B cell (primary cell): ENCODE measurements at regions of chr15 and their contacts with region 1.

Region 1: DNA sequence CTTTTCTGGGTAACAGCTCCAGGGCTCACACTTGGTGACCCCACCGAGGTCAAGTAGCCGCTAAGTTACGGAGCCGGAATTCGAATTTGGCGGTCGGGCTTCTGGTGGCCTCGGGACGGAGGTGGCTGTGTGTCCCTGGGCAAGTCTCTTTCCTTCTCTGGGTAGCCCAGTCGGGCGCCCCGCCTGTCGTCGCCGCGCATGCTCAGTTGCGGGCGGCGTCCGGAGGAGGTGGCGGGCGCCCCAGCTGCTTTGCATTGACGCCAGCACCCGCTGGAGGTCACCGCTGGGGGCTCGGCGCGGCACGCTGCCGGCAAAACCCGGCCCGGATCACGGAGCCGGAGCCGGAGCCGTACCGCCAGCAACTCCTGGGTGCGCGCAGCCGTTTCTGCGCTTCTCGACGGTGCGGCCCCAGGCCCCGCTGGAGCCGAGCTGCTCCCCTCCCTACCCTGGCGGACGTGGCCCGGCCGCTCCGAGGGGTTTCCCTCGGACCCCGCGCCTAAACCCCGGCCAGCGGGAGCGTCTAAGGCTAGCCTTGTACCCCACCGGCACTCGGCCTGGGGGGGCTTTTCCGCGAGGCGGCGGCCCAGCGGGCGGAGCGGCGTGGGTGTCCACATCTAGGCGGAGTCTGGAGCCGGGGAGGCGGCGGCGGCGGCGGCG is 474 bp upstream of the PDE8A start:
- DNase-seq: peak; percentile 98
- ATAC-seq: peak; percentile 72
- H3K4me3 ChIP-seq: peak overlapping the region; percentile 66 to 97 (median 79)
- H3K4me3 Mint-ChIP-seq: peak overlapping the region; percentile 96
- H3K27ac ChIP-seq: peak overlapping the region; percentile 97
- H3K27ac Mint-ChIP-seq: peak overlapping the region; percentile 97
- H3K4me1 ChIP-seq: peaks cover 21 to 22% of the 10 kb centered on the region in 2 donors
- H3K4me1 Mint-ChIP-seq: peaks cover 41% of the 10 kb centered on the region
- H3K27me3 ChIP-seq: no peaks in the 10 kb centered on the region
- H3K27me3 Mint-ChIP-seq: no peaks in the 10 kb centered on the region
- CTCF ChIP-seq: no peak

Region 2: DNA sequence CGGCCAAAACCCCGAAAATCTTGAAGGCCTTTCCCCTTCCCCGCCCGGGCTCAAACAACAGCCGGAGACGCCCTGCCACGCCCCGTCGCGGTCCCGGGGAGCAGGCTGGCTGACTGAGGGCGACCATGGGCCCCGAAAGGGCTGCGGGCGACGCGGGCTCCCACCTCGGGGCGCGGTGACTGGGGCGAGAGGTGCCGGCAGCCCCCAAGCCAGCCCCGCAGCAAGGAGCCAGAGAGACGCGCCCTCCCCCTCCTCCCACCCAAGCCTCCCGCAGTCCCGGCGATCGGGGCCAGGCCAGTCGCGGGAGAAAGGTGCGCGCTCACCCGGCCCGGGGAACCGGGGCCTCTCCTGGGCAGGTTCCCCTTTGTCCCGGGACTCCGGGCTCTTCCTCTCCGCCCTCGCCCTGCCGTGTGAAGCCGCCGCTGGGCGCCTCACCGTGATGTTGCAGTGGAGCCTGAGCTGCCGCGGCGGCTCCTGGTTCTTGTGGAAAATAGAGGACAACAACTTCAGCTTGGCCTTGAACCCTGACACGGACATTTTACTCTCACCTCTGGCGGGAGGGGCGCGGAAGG is 410.9 kb before region 1 on chr15:
- CTCF ChIA-PET with region 1: interaction called, 15 read pairs
- POLR2A ChIA-PET with region 1: interaction called, 5 read pairs
- intact Hi-C with region 1: loop called (anchors 2 kb)
- DNase-seq: peak; percentile 66
- ATAC-seq: peak; percentile 43
- H3K4me3 ChIP-seq: peak overlapping the region; percentile 30 to 87 (median 75)
- H3K4me3 Mint-ChIP-seq: peak overlapping the region; percentile 93
- H3K27ac ChIP-seq: peak overlapping the region; percentile 34 to 59
- H3K27ac Mint-ChIP-seq: peak overlapping the region; percentile 90
- H3K4me1 ChIP-seq: peaks cover 0 to 12% of the 10 kb centered on the region in 2 donors
- H3K4me1 Mint-ChIP-seq: peaks cover 4% of the 10 kb centered on the region
- H3K27me3 ChIP-seq: no peaks in the 10 kb centered on the region
- H3K27me3 Mint-ChIP-seq: no peaks in the 10 kb centered on the region
- CTCF ChIP-seq: no peak

Region 3: GRCh38 chr15:84716036-84716799 is 265.0 kb before region 1 on chr15 and contains the start of gene SEC11A:
- CTCF ChIA-PET with region 1: no interaction called
- POLR2A ChIA-PET with region 1: no interaction called
- intact Hi-C with region 1: loop called (anchors 5 kb)
- DNase-seq: peak; percentile 96
- ATAC-seq: peak; percentile 96
- H3K4me3 ChIP-seq: peak within 1 kb of the TSS; percentile 70 to 99 (median 87)
- H3K4me3 Mint-ChIP-seq: peak within 1 kb of the TSS; percentile 93
- H3K27ac ChIP-seq: peak within 1 kb of the TSS; percentile 82 to 92
- H3K27ac Mint-ChIP-seq: peak within 1 kb of the TSS; percentile 94
- H3K4me1 ChIP-seq: peaks cover 28 to 39% of the 10 kb centered on the region in 2 donors
- H3K4me1 Mint-ChIP-seq: peaks cover 46% of the 10 kb centered on the region
- H3K27me3 ChIP-seq: no peaks in the 10 kb centered on the region
- H3K27me3 Mint-ChIP-seq: no peaks in the 10 kb centered on the region
- CTCF ChIP-seq: no peak
- total RNA-seq, gene SEC11A: 69.8 and 78.0 TPM in 2 replicates

Region 4: GRCh38 chr15:84967380-84967779 is 13.8 kb before region 1 on chr15:
- CTCF ChIA-PET with region 1: no interaction called
- POLR2A ChIA-PET with region 1: no interaction called
- intact Hi-C with region 1: no loop called
- DNase-seq: no peak
- ATAC-seq: no peak
- H3K4me3 ChIP-seq: no peak overlapping the region
- H3K4me3 Mint-ChIP-seq: no peak overlapping the region
- H3K27ac ChIP-seq: no peak overlapping the region
- H3K27ac Mint-ChIP-seq: no peak overlapping the region
- H3K4me1 ChIP-seq: no peaks in the 10 kb centered on the region
- H3K4me1 Mint-ChIP-seq: no peaks in the 10 kb centered on the region
- H3K27me3 ChIP-seq: peaks cover 0 to 8% (median 0%) of the 10 kb centered on the region in 4 experiments
- H3K27me3 Mint-ChIP-seq: peaks cover 16% of the 10 kb centered on the region
- CTCF ChIP-seq: no peak

Region 5: DNA sequence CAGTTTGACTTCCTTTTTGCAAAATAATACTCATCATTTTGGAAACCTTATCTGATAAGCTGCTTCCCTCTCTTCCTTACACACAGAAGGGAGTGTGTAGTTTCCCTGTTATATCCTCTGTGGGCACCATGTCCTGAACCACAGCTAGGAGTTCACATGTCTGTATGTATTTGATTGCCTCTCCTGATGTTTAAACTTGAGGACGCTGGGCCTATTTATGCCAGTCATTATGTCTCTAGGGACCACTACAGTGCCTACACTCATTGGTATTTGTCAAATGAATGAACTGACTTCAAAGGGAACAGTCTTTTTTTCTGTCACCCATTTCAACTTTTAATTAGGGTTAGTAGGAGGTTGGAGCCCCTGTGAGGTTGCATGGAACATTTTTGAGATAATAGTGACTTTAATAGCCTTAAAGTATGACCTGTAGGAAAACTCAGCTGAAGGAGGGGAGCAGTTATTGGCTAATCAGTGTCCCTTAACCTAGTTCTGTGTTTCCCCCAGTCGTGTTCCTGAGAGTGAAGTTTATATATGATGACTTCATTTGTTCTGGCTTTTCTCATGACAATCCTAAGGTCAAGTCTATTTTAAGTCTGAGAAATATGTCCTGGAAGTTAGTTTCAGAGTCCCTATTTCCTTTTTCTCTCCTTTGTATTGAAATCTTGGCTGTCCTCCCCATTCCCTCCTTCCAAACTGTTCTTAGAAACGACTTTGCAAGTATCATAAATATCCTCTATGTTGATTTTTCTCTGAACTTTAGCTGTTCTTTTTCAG is 29.4 kb after region 1 on chr15:
- CTCF ChIA-PET with region 1: interaction called, 10 read pairs
- POLR2A ChIA-PET with region 1: interaction called, 5 read pairs
- intact Hi-C with region 1: loop called (anchors 2 kb)
- DNase-seq: peak; percentile 33
- ATAC-seq: peak; percentile 59
- H3K4me3 ChIP-seq: peak overlapping the region in 1 of 5 experiments; percentile 8
- H3K4me3 Mint-ChIP-seq: peak overlapping the region; percentile 3
- H3K27ac ChIP-seq: peak overlapping the region; percentile 44 to 54
- H3K27ac Mint-ChIP-seq: peak overlapping the region; percentile 57
- H3K4me1 ChIP-seq: peaks cover 51 to 58% of the 10 kb centered on the region in 2 donors
- H3K4me1 Mint-ChIP-seq: peaks cover 67% of the 10 kb centered on the region
- H3K27me3 ChIP-seq: no peaks in the 10 kb centered on the region
- H3K27me3 Mint-ChIP-seq: no peaks in the 10 kb centered on the region
- CTCF ChIP-seq: peak; percentile 58

Region 6: DNA sequence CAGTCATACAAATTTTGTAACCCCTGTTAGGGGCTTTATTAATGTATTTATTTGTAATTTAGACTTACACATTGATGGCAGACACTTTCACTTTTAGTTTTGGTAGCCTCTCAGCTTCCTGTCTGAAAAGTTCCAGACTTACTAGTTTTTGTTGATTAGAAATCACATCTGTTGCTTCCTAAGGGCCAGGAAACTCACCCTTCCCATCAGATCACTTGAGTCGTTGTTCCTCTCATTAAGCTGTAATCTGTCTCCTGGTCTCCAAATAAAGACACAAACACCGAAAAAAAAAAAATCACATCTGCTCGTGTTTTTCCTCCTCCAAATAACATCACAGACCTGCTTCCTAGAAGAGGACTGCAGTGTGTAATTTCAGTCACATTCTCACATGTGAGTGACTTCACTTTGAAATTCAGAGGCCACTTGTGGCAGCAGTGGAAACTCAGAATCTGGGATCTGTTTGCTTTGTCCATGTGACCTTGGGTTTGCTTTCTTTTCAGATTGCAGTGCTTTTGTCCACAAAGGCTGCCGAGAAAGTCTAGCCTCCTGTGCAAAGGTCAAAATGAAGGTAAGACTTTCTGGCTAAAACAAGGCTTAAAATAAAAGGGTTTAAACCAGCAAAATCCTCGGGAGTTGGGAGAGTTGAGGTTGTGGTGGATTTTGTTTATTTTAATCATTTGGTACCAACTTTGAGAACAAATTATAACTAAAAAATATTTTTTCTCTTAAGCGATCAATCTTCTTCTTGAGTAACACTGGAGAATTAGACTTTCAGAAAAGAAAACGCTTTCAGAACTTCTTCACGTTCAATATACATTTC is 726.5 kb after region 1 on chr15:
- CTCF ChIA-PET with region 1: no interaction called
- POLR2A ChIA-PET with region 1: no interaction called
- intact Hi-C with region 1: loop called (anchors 5 kb)
- DNase-seq: no peak
- ATAC-seq: peak; percentile 37
- H3K4me3 ChIP-seq: peak overlapping the region; percentile 9 to 66 (median 29)
- H3K4me3 Mint-ChIP-seq: peak overlapping the region; percentile 82
- H3K27ac ChIP-seq: peak overlapping the region; percentile 96 to 99
- H3K27ac Mint-ChIP-seq: peak overlapping the region; percentile 96
- H3K4me1 ChIP-seq: peaks cover 51 to 56% of the 10 kb centered on the region in 2 donors
- H3K4me1 Mint-ChIP-seq: peaks cover 71% of the 10 kb centered on the region
- H3K27me3 ChIP-seq: no peaks in the 10 kb centered on the region
- H3K27me3 Mint-ChIP-seq: no peaks in the 10 kb centered on the region
- CTCF ChIP-seq: no peak